ENCODE measurements at regions of chr1 and their contacts with region 1.

Region 1: GRCh38 chr1:165597883-165598675 is 33.0 kb upstream of the MGST3 start:
- DNase-seq: peak; percentile 92 to 99 (median 97)

Region 2: DNA sequence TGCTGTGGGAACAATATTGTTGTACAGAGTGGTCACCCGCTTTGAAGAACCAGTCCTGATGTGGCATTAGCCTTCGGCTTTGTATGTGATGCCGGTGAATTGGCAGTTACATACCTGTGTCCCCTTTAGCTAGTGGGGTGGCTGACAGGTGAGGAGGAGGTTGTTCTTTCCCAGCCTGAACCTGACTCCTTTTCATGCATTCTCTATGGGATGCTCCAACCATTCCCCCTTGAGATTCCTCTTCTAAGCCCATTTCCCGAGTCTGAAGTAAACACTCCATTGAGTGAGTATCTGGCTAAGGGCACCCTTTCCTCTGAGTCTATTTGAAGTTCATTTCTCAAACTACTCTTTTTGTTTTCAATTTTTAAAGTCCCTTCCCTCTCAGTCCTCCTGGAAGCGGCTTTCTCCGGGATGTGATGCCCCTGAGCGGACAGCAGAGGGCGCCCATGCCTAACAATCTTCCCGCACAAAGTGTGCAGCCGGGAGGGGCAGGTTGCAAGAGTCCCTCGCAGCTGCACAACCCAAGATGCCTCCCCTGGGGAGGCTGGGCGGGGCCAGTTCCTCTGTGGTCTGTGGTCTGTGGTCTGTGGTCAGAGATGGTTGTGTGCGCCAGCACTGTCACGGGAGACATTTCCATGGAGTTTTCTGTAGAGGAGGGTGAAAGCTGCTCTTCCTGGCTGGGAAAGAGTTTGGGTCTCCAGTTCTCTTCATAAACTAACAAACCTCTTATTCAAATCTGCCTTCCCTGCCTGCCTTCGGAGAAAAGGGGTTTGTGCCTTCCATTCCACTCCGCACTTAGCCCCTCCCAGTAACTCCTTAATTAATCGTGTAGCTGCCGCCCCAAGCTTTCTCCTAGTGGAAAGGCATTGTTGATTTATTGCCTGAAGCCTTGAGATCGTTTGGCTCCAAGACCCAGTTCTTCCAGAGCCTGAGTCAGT is 205.2 kb before region 1 on chr1:
- intact Hi-C with region 1: loop called (anchors 5 kb)
- DNase-seq: peak; percentile 71 to 92 (median 83)

Region 3: DNA sequence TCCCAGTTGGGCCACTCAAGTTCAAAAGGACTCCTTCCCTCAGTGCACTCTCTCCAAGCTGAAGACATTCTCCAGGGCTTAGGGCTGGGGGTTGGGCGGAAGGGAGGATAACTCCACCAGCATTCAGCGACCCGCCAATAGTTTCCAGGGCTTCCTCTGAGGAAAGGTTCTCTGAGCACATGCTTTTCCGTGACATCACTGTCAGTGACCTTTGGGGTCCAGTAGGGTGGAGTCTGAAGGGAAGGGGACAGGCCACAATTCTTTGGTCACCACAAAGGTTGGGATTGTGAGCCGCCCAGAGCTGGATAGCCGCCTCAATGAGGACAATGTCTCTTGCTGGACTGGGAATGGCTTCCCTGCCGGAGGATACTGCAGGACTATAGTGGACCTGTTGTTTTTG is 130.4 kb before region 1 on chr1:
- intact Hi-C with region 1: no loop called
- DNase-seq: peak in 13 of 42 donors; percentile 11 to 69 (median 30)

Region 4: GRCh38 chr1:165666152-165666825 is 68.2 kb after region 1 on chr1:
- intact Hi-C with region 1: no loop called
- DNase-seq: no peak